Caco-2 (cell line): ENCODE measurements at regions of chr13 and their contacts with region 1.

Region 1: DNA sequence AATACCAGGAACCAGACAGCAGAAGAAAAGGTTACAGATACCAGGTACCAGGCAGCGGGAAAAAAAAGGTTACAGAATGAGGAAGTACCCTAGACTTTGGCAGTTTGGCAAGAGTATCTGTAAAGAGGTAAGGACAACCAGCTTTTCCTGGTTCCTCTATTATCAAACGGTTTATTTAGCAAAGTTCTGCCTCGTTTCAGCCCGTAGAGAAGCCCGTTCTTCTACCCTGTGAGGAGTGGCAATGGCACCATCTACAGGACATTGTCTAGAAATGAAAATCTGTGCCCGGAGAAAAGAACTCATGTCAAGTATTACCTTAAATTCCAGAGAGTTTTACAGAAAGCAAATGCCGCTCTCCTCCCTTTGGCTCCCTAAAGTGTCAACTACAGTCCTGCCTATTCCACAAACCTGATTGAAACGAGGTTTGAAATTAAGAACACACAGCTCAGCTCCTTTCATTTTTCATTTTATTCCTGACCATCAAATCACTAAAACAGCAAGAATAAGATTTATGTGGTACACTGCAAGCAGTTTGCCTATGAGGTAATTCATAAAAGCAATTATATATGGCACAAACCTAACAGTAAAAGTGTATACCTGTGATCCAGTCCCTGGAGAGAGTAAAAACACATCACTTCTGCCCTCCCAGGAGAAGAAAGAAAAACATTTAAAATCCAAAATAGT is 226.3 kb downstream of the SLC7A1 start:
- DNase-seq: peak in 1 of 2 experiments; percentile 30
- H3K4me3 ChIP-seq: no peak overlapping the region
- H3K4me3 Mint-ChIP-seq: no peak overlapping the region
- H3K27ac Mint-ChIP-seq: no peak overlapping the region
- H3K4me1 ChIP-seq: no peaks in the 10 kb centered on the region
- H3K4me1 Mint-ChIP-seq: no peaks in the 10 kb centered on the region
- H3K27me3 ChIP-seq: no peaks in the 10 kb centered on the region
- H3K27me3 Mint-ChIP-seq: peaks cover 9% of the 10 kb centered on the region
- CTCF ChIP-seq: peak; percentile 44 to 68

Region 2: DNA sequence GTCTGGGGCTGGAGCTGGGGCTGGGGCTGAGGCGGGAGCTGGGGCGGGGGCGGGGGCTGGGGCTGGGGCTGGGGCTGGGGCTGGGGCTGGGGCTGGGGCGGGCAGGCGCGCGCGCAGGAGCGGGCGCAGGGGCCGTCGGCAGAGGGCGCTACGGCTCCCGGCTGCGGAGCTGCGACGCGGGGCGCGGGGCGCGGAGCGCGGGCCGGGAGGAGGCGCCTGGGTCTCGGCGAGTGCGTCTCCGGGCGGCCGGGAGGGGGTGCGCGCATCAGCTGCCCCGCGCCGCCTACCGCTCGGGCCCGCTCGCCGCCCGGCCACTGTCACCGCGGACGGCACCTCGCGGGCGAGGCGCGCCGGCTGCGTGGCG is 549.5 kb before region 1 on chr13:
- CTCF ChIA-PET with region 1: interaction called, 7 read pairs
- POLR2A ChIA-PET with region 1: no interaction called
- intact Hi-C with region 1: loop called (anchors 1 kb)
- DNase-seq: peak; percentile 49 to 86
- H3K4me3 ChIP-seq: peak overlapping the region; percentile 32
- H3K4me3 Mint-ChIP-seq: peak overlapping the region; percentile 63
- H3K27ac Mint-ChIP-seq: no peak overlapping the region
- H3K4me1 ChIP-seq: peaks cover 5% of the 10 kb centered on the region; the same call in 1 of the 2 replicates
- H3K4me1 Mint-ChIP-seq: peaks cover 5% of the 10 kb centered on the region
- H3K27me3 ChIP-seq: peaks cover 4% of the 10 kb centered on the region
- H3K27me3 Mint-ChIP-seq: peaks cover 29% of the 10 kb centered on the region
- CTCF ChIP-seq: no peak

Region 3: GRCh38 chr13:30572859-30573275 is 1203.7 kb after region 1 on chr13:
- CTCF ChIA-PET with region 1: no interaction called
- POLR2A ChIA-PET with region 1: no interaction called
- intact Hi-C with region 1: no loop called
- DNase-seq: no peak
- H3K4me3 ChIP-seq: no peak overlapping the region
- H3K4me3 Mint-ChIP-seq: no peak overlapping the region
- H3K27ac Mint-ChIP-seq: no peak overlapping the region
- H3K4me1 ChIP-seq: no peaks in the 10 kb centered on the region; the same call in 1 of the 2 replicates
- H3K4me1 Mint-ChIP-seq: no peaks in the 10 kb centered on the region
- H3K27me3 ChIP-seq: no peaks in the 10 kb centered on the region; the same call in 1 of the 2 replicates
- H3K27me3 Mint-ChIP-seq: no peaks in the 10 kb centered on the region
- CTCF ChIP-seq: peak in 1 of 2 experiments; percentile 13